Ascending aorta (tissue), 2 donors: ENCODE measurements at regions of chr16 and their contacts with region 1.

Region 1: DNA sequence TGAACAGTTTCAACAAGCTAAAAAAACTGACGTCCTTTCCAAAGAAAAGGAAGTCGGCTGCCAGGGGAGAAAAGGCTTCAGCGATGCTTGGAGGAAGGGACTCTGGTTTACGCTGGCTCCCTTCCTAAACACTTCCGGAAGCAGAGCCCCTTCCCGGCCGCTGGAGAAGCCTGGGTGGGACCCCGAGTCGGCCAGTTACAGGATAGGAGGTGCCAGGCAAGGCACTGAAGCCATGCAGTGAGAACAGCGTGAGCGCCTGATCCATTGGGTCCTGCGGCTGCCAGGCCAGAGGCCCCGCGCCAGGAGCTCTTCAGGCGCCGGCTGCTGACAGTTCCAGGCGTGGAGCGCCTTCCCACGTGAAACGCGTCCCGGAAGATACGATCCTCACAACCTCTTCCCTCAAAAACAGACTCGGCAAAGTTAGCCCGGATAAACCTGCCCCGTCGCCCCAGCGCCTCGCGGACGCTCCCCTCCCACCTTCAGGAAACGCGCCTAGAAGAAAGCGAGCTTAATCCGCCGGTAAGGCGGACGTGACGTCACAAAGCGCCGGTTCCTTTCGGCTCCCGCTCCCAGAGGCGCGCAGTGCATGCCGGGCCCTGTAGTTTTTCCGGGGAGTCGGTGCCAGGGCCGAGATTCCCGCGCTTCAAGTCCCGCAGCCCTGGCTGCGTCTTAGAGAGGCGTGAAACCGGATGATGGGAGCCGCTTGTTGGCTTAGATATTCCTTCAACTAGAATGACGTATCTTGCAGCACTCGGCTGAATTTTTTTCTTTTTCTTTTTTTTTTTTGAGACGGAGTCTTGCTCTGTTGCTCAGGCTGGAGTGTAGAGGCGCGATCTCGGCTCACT is at the start of gene ADAT1:
- DNase-seq: peak; percentile 97 to 100
- H3K4me3 ChIP-seq: peak within 1 kb of the TSS; percentile 67 to 75
- H3K27ac ChIP-seq: peak within 1 kb of the TSS; percentile 91 to 95
- H3K4me1 ChIP-seq: peaks cover 0 to 27% of the 10 kb centered on the region in 2 donors
- H3K27me3 ChIP-seq: no peaks in the 10 kb centered on the region
- CTCF ChIP-seq: no peak
- total RNA-seq, gene ADAT1: 21.2 TPM

Region 2: DNA sequence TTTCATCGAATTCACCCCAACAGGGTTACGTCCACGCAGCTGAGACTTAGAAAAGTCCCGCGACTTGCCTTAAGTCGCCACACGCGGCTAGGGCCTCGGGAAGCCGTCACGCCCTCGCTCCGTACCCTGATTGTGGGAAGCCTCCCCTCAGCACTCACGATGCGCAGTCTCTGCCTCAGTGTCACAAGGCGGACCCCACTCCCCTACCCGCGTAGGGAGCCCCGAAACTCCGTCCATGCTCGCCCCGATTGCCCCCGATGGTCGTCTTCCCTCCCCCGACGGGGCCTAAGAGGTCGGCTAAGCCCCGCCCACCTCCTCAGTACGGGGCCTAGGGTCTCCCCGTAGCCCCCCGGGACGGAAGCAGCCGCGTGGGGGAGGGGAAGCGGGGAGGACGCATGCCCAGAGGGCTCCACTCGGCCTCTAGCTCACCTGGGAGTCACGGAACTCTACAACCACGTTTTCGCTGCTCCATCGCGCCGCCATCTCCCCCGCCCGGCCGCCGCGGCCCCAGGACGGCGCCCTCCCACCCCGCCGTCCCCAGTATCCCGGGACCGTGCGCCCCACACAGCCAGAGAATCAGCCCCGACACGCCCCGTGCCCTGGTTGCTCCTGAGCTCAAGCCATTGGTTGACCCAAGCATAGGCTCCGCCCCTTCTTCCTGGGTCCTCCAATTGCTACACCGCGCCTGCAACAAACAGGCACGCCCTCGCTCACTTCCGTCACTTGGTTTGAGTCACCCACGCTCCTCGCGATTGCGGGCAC is 638.3 kb before region 1 on chr16 and contains the start of gene WDR59:
- intact Hi-C with region 1: loop called (anchors 10 kb)
- DNase-seq: peak; percentile 100
- H3K4me3 ChIP-seq: peak within 1 kb of the TSS; percentile 81 to 83
- H3K27ac ChIP-seq: peak within 1 kb of the TSS; percentile 58 to 73
- H3K4me1 ChIP-seq: peaks cover 0 to 9% of the 10 kb centered on the region in 2 donors
- H3K27me3 ChIP-seq: no peaks in the 10 kb centered on the region
- CTCF ChIP-seq: no peak
- total RNA-seq, gene WDR59: 22.0 TPM

Region 3: GRCh38 chr16:75108792-75109734 is 513.9 kb before region 1 on chr16:
- intact Hi-C with region 1: no loop called
- DNase-seq: peak; percentile 88 to 96
- H3K4me3 ChIP-seq: peak overlapping the region; percentile 12 to 14
- H3K27ac ChIP-seq: peak overlapping the region; percentile 82 to 83
- H3K4me1 ChIP-seq: peaks cover 8 to 36% of the 10 kb centered on the region in 2 donors
- H3K27me3 ChIP-seq: no peaks in the 10 kb centered on the region
- CTCF ChIP-seq: no peak

Region 4: GRCh38 chr16:75464130-75464918 is 158.7 kb before region 1 on chr16 and contains the start of gene TMEM170A:
- intact Hi-C with region 1: loop called (anchors 2 kb)
- DNase-seq: peak; percentile 98 to 100
- H3K4me3 ChIP-seq: peak within 1 kb of the TSS; percentile 86 to 97
- H3K27ac ChIP-seq: peak within 1 kb of the TSS; percentile 93 to 96
- H3K4me1 ChIP-seq: peaks cover 0 to 7% of the 10 kb centered on the region in 2 donors
- H3K27me3 ChIP-seq: no peaks in the 10 kb centered on the region
- CTCF ChIP-seq: peak; percentile 100
- total RNA-seq, gene TMEM170A: 33.0 TPM

Region 5: DNA sequence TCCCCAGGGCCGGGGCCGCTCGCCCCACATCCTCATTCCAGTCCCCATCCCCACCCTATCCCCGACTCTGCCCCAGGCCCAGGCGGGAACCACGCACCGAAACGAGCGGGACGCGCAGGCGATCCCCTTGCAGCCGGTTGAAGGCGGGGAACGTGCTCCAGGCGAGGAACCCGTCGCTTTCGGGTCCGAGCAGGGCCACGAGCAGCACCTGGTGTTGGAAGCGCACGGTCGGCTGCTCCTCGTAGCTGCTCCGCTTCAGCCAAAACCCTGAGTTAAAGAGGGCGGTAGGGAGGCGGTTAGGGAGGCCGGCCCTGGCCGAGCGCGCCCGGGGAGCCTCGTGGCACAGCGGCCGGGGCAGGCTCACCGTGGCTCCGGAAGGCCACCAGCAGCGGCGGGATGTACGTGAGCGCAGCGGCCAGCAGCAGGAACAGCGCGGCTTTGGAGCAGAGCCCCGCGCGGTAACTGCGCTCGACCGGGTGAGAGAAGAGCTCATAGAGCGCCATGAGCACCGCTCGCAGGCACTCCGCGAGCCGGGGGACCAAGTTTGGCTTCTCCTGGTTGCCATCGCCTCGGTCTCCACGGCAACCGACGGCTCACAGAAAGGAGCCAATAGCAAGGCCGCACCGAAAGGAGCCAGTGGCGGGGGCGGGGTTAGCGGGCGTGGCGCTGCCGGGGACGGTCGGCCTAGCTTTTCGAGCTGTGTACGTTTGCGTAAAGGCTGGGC is 67.1 kb before region 1 on chr16 and contains the start of gene TMEM231:
- intact Hi-C with region 1: loop called (anchors 2 kb)
- DNase-seq: peak; percentile 91 to 99
- H3K4me3 ChIP-seq: peak within 1 kb of the TSS; percentile 64 to 84
- H3K27ac ChIP-seq: peak within 1 kb of the TSS; percentile 63 to 80
- H3K4me1 ChIP-seq: peaks cover 0 to 5% of the 10 kb centered on the region in 2 donors
- H3K27me3 ChIP-seq: no peaks in the 10 kb centered on the region
- CTCF ChIP-seq: no peak
- total RNA-seq, gene TMEM231: 59.9 TPM

Region 6: GRCh38 chr16:75593825-75594820 is 28.9 kb before region 1 on chr16:
- intact Hi-C with region 1: loop called (anchors 2 kb)
- DNase-seq: no peak
- H3K4me3 ChIP-seq: no peak overlapping the region
- H3K27ac ChIP-seq: peak overlapping the region; percentile 8 to 35
- H3K4me1 ChIP-seq: peaks cover 4 to 14% of the 10 kb centered on the region in 2 donors
- H3K27me3 ChIP-seq: no peaks in the 10 kb centered on the region
- CTCF ChIP-seq: no peak